ENCODE measurements at regions of chr12 and their contacts with region 1.

Region 1: DNA sequence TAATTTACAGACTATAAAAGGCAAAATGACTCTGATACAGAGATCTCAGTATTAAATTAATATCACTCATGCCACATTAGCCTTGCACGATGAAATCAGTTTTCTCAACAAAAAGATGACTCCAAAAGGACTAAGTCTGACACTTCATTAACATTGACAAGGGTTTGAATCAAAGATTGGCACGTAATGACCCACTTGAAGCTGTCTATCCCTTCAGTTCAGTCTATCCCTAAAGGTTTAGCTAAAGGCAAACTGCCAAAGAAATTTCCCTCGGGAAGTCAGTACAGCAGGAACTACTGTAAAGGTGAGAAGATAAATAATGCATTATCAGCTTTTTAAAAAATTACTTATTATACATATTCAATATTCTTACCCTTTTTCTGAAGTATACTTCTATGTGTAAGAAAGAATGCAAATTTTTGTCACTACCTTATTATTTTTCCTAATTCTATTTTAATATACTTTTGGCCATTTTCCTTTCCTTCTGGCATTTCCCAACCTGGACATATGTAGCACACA is 127.1 kb downstream of the NELL2 start:
- DNase-seq: no peak
- H3K4me3 ChIP-seq: no peak overlapping the region
- H3K27ac ChIP-seq: no peak overlapping the region
- H3K4me1 ChIP-seq: no peaks in the 10 kb centered on the region
- H3K27me3 ChIP-seq: no peaks in the 10 kb centered on the region
- CTCF ChIP-seq: no peak

Region 2: GRCh38 chr12:44405297-44405696 is 343.7 kb before region 1 on chr12:
- CTCF ChIA-PET with region 1: no interaction called
- POLR2A ChIA-PET with region 1: interaction called, 21 read pairs
- intact Hi-C with region 1: no loop called
- DNase-seq: no peak
- H3K4me3 ChIP-seq: no peak overlapping the region
- H3K27ac ChIP-seq: no peak overlapping the region
- H3K4me1 ChIP-seq: no peaks in the 10 kb centered on the region
- H3K27me3 ChIP-seq: no peaks in the 10 kb centered on the region
- CTCF ChIP-seq: no peak